Activated T-helper 2 cell treated with anti-CD3 and anti-CD28 coated beads, Interferon-gamma antibody, Interleukin-2, Interleukin-4, amounts not matched to agents 10 μg/mL and 5 μg/mL and 100 μg/mL, durations not matched to agents 14 hours and 24 hours and 36 hours (primary cell): ENCODE measurements at regions of chr14 and their contacts with region 1.

Region 1: GRCh38 chr14:58244556-58245387 is at the start of gene PSMA3:
- DNase-seq: peak; percentile 98
- H3K4me3 Mint-ChIP-seq: peak within 1 kb of the TSS; percentile 94
- H3K27ac Mint-ChIP-seq: peak within 1 kb of the TSS; percentile 96
- H3K4me1 Mint-ChIP-seq: peaks cover 39% of the 10 kb centered on the region
- H3K27me3 Mint-ChIP-seq: no peaks in the 10 kb centered on the region
- total RNA-seq, gene PSMA3: 407 and 425 TPM in 2 replicates

Region 2: GRCh38 chr14:58072288-58073071 is 172.3 kb before region 1 on chr14:
- intact Hi-C with region 1: no loop called
- DNase-seq: peak; percentile 22
- H3K4me3 Mint-ChIP-seq: no peak overlapping the region
- H3K27ac Mint-ChIP-seq: no peak overlapping the region
- H3K4me1 Mint-ChIP-seq: no peaks in the 10 kb centered on the region
- H3K27me3 Mint-ChIP-seq: peaks cover 4% of the 10 kb centered on the region

Region 3: DNA sequence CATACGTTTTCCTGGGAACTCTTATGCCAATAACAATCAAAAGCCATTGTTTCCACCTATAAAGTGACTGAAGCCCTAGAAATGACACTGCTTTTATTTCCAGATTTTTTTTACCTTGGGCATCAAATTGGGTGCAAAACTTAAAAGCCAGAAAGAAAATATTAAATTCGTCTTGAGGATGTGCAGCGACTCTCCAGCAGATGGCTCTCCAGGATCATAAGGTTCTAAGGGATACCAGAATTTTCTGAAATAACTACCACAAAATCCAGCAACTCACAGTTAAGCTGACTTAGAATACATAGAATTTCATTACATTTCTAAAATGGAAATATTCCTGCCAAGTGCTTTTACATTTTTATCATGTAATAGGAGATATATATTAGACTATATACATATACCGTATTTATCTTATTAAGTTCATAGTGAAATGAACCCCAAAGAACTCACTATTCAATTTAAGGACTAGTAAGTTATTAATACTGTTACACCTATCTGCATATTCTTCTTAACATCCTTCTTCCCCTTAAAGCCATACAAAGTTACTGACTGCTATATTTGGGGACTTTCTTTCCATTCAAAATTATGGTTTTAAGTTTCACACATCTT is 136.7 kb before region 1 on chr14:
- intact Hi-C with region 1: loop called (anchors 10 kb)
- DNase-seq: no peak
- H3K4me3 Mint-ChIP-seq: no peak overlapping the region
- H3K27ac Mint-ChIP-seq: no peak overlapping the region
- H3K4me1 Mint-ChIP-seq: no peaks in the 10 kb centered on the region
- H3K27me3 Mint-ChIP-seq: peaks cover 30% of the 10 kb centered on the region

Region 4: GRCh38 chr14:58199726-58200479 is 44.9 kb before region 1 on chr14 and contains the start of gene ACTR10:
- intact Hi-C with region 1: loop called (anchors 1 kb)
- DNase-seq: peak; percentile 80
- H3K4me3 Mint-ChIP-seq: peak within 1 kb of the TSS; percentile 92
- H3K27ac Mint-ChIP-seq: peak within 1 kb of the TSS; percentile 79
- H3K4me1 Mint-ChIP-seq: peaks cover 16% of the 10 kb centered on the region
- H3K27me3 Mint-ChIP-seq: peaks cover 9% of the 10 kb centered on the region
- total RNA-seq, gene ACTR10: 38.2 and 39.8 TPM in 2 replicates

Region 5: GRCh38 chr14:58280954-58281787 is 36.4 kb after region 1 on chr14:
- intact Hi-C with region 1: loop called (anchors 2 kb)
- DNase-seq: peak; percentile 12
- H3K4me3 Mint-ChIP-seq: peak overlapping the region; percentile 38
- H3K27ac Mint-ChIP-seq: peak overlapping the region; percentile 92
- H3K4me1 Mint-ChIP-seq: peaks cover 57% of the 10 kb centered on the region
- H3K27me3 Mint-ChIP-seq: no peaks in the 10 kb centered on the region

Region 6: GRCh38 chr14:58309086-58309485 is 64.3 kb after region 1 on chr14:
- intact Hi-C with region 1: no loop called
- DNase-seq: no peak
- H3K4me3 Mint-ChIP-seq: no peak overlapping the region
- H3K27ac Mint-ChIP-seq: no peak overlapping the region
- H3K4me1 Mint-ChIP-seq: peaks cover 2% of the 10 kb centered on the region
- H3K27me3 Mint-ChIP-seq: no peaks in the 10 kb centered on the region

Region 7: DNA sequence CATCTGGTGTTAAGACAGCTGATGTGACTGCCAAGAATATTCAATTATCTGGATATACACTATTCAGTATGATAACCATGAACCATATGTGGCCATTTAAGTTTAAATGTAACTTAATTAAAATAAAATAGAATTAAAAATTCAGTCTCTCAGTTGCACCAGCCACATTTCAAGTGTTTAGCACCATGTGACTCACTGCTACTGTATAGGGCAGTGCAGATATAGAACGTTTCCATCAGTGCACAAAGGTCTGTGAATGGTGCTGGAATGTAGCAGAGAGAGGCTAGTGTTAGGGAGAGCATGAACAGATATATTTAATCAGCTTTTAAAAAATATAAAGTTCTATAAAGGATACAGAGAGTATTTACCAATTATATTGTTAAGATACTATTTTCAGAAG is 82.2 kb after region 1 on chr14:
- intact Hi-C with region 1: no loop called
- DNase-seq: no peak
- H3K4me3 Mint-ChIP-seq: no peak overlapping the region
- H3K27ac Mint-ChIP-seq: no peak overlapping the region
- H3K4me1 Mint-ChIP-seq: peaks cover 9% of the 10 kb centered on the region
- H3K27me3 Mint-ChIP-seq: no peaks in the 10 kb centered on the region

Region 8: GRCh38 chr14:58395812-58396788 is 151.3 kb after region 1 on chr14 and contains the start of gene TOMM20L:
- intact Hi-C with region 1: no loop called
- DNase-seq: peak; percentile 67
- H3K4me3 Mint-ChIP-seq: peak within 1 kb of the TSS; percentile 67
- H3K27ac Mint-ChIP-seq: peak within 1 kb of the TSS; percentile 36
- H3K4me1 Mint-ChIP-seq: peaks cover 9% of the 10 kb centered on the region
- H3K27me3 Mint-ChIP-seq: no peaks in the 10 kb centered on the region
- total RNA-seq, gene TOMM20L: not detected in 2 replicates